GM13977 (cell line): ENCODE measurements at regions of chrX and their contacts with region 1.

Region 1: GRCh38 chrX:23907498-23908218 is at the starts of genes APOO and CXorf58:
- DNase-seq: peak; percentile 91
- CTCF ChIP-seq: peak; percentile 70

Region 2: GRCh38 chrX:23694606-23695005 is 213.1 kb before region 1 on chrX:
- in situ Hi-C with region 1: loop called (anchors 10 kb)
- DNase-seq: peak; percentile 67
- CTCF ChIP-seq: peak; percentile 65